Endothelial cell of umbilical vein (primary cell): ENCODE measurements at regions of chr3 and their contacts with region 1.

Region 1: DNA sequence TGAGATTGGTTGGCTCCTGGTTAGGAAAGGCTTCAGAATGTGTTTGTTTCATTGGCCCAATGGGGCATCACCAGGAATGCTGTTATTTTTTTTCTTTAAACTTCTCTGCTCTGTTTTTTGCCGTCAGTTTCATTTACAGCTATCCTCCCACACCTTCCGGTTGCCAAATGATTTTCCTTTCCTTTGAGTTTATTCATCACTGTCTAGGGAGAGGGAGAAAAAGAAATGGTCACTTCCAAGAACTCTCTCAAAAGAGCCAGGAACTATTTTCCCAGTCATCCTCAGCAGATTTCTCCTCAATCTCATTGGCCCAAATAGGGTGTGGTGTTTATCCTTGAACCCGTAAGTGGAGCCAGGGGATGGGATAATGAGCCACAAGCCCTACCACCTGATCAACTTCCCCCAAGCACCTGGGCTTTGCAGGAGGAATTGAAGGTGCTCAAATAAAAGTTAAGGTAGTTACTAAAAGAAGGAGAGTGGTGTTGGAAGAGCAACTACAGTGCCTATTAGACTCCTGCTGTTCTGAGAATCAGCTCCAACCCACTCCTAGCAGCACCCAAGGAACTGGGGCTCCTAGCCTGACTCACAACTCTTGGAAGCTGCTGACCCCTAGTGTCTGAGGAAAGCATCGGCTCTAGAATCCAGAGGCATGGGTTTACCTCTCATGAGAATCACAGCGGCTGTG is 183.8 kb upstream of the IL12A start:
- DNase-seq: peak; percentile 85
- H3K4me3 ChIP-seq: no peak overlapping the region
- H3K27ac ChIP-seq: peak overlapping the region; percentile 19
- H3K4me1 ChIP-seq: peaks cover 18% of the 10 kb centered on the region
- H3K27me3 ChIP-seq: no peaks in the 10 kb centered on the region
- CTCF ChIP-seq: peak; percentile 92 to 96
- POLR2A ChIP-seq: no peak

Region 2: GRCh38 chr3:159322322-159322939 is 482.4 kb before region 1 on chr3:
- CTCF ChIA-PET with region 1: interaction called, 12 read pairs
- POLR2A ChIA-PET with region 1: no interaction called
- dilution Hi-C with region 1: no loop called
- intact Hi-C with region 1: loop called (anchors 1 kb)
- DNase-seq: no peak
- H3K4me3 ChIP-seq: no peak overlapping the region
- H3K27ac ChIP-seq: no peak overlapping the region
- H3K4me1 ChIP-seq: no peaks in the 10 kb centered on the region
- H3K27me3 ChIP-seq: no peaks in the 10 kb centered on the region
- CTCF ChIP-seq: peak; percentile 54 to 61
- POLR2A ChIP-seq: no peak

Region 3: DNA sequence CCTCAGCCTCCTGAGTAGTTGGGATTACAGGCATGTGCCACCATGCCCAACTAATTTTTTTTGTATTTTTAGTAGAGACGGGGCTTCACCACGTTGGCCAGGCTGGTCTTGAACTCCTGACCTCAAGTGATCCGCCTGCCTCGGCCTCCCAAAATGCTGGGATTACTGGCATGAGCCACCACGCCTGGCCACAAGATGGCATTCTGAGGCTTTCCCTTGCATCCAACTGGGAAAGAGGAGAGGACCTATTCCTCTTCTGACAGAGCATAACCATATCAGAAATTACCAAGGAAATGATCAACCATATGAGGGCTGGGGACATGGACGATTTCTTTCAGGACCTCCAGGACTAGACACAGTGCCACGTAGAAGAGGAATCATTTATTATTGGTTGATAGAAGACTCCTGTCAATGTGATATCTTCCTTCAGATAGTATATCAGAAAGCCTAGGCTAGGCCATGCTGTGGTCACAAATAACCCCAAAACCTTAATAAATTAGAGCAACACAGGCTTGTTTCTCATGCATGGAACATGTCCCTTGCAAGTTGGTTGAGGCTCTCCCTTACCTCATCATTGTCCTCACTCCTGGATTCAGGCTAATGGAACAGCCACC is 188.5 kb before region 1 on chr3:
- CTCF ChIA-PET with region 1: interaction called, 40 read pairs
- POLR2A ChIA-PET with region 1: no interaction called
- dilution Hi-C with region 1: no loop called
- intact Hi-C with region 1: loop called (anchors 1 kb)
- DNase-seq: peak; percentile 60
- H3K4me3 ChIP-seq: no peak overlapping the region
- H3K27ac ChIP-seq: no peak overlapping the region
- H3K4me1 ChIP-seq: peaks cover 18% of the 10 kb centered on the region
- H3K27me3 ChIP-seq: no peaks in the 10 kb centered on the region
- CTCF ChIP-seq: peak; percentile 38 to 64
- POLR2A ChIP-seq: no peak

Region 4: DNA sequence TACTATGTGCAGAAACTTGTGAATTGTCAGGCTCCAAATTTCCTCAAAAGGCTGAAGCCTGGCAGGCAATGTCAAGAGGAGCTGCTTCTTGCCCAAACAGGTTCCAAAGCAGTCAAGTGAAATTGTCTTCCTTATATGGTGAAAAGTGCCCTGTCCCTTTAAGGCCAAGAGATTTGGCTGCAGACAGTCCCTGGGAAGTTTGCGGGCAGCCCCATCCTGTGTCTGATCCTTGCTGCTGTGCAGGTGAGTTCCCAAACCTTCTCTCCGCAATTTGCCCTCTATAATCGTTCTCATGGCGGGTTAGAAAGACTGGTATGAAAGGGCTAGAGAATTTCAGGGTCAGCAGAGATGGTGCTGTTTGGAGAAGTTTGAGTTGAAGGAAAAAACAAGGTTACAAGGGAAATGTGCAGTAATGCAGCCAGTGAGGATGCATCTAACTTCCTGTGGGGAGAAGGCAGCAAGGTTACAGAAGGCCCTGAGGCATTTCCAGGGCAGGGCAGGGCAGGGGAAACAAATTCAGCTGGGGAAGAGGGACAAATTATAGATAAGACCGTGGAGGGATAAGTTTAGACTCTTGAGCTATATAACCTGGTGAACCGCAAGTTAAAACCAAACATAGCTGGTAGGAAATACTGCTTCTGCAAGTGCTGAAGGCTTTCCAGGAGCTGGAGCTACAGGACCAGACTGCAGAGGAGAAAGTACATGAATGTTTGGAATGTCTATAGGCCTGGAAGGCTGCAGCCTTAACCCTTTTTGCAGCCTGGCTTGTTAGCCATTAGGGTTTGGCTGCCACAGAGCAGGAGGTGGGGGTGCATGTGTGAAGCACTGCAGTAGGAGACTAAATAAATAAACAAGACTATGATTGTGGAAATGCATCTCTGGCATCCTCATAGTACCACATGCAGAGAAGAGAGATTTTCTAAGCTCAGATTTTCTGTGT is 72.4 kb before region 1 on chr3:
- CTCF ChIA-PET with region 1: interaction called, 11 read pairs
- POLR2A ChIA-PET with region 1: no interaction called
- dilution Hi-C with region 1: no loop called
- intact Hi-C with region 1: loop called (anchors 1 kb)
- DNase-seq: peak; percentile 53
- H3K4me3 ChIP-seq: no peak overlapping the region
- H3K27ac ChIP-seq: no peak overlapping the region
- H3K4me1 ChIP-seq: peaks cover 28% of the 10 kb centered on the region
- H3K27me3 ChIP-seq: no peaks in the 10 kb centered on the region
- CTCF ChIP-seq: no peak
- POLR2A ChIP-seq: no peak

Region 5: GRCh38 chr3:159781867-159782266 is 23.0 kb before region 1 on chr3:
- CTCF ChIA-PET with region 1: interaction called, 58 read pairs
- POLR2A ChIA-PET with region 1: no interaction called
- dilution Hi-C with region 1: no loop called
- intact Hi-C with region 1: no loop called
- DNase-seq: no peak
- H3K4me3 ChIP-seq: no peak overlapping the region
- H3K27ac ChIP-seq: no peak overlapping the region
- H3K4me1 ChIP-seq: peaks cover 25% of the 10 kb centered on the region
- H3K27me3 ChIP-seq: no peaks in the 10 kb centered on the region
- CTCF ChIP-seq: no peak
- POLR2A ChIP-seq: no peak

Region 6: GRCh38 chr3:159872374-159873109 is 67.7 kb after region 1 on chr3:
- CTCF ChIA-PET with region 1: no interaction called
- POLR2A ChIA-PET with region 1: no interaction called
- dilution Hi-C with region 1: no loop called
- intact Hi-C with region 1: no loop called
- DNase-seq: peak; percentile 85
- H3K4me3 ChIP-seq: no peak overlapping the region
- H3K27ac ChIP-seq: peak overlapping the region; percentile 92
- H3K4me1 ChIP-seq: peaks cover 19% of the 10 kb centered on the region
- H3K27me3 ChIP-seq: no peaks in the 10 kb centered on the region
- CTCF ChIP-seq: peak; percentile 12 to 25
- POLR2A ChIP-seq: no peak

Region 7: DNA sequence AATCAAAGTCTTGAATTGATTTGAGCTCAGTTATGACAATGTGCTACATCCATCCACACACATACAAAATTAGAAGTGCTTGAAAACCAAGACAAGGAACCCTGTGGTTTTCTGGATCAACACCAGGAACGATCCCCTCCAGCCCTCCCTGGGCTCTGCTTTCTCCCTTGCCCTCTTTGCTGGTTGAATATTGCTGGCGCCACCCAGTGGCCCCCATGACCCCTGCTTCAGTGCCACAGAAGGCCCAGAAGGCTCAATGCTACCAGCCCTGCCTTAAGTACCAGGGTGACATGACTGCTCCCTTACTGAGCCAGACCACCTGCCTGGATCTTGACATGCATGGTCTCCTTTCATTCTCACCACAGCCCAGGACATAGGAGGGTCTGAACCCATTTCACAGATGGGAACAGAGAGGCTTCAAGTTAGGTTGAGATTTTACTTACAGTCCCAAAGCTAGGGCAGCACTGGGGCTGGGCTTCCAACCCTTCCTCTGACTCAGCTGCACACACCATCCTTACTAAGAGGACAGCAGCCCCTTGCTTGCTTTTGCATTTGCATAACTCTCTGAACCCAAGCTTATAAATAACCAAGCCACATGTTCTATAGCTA is 198.8 kb after region 1 on chr3:
- CTCF ChIA-PET with region 1: interaction called, 30 read pairs
- POLR2A ChIA-PET with region 1: no interaction called
- dilution Hi-C with region 1: no loop called
- intact Hi-C with region 1: loop called (anchors 1 kb)
- DNase-seq: peak; percentile 68
- H3K4me3 ChIP-seq: no peak overlapping the region
- H3K27ac ChIP-seq: no peak overlapping the region
- H3K4me1 ChIP-seq: no peaks in the 10 kb centered on the region
- H3K27me3 ChIP-seq: no peaks in the 10 kb centered on the region
- CTCF ChIP-seq: peak; percentile 67
- POLR2A ChIP-seq: no peak